ENCODE measurements at regions of chr12 and their contacts with region 1.

Region 1: DNA sequence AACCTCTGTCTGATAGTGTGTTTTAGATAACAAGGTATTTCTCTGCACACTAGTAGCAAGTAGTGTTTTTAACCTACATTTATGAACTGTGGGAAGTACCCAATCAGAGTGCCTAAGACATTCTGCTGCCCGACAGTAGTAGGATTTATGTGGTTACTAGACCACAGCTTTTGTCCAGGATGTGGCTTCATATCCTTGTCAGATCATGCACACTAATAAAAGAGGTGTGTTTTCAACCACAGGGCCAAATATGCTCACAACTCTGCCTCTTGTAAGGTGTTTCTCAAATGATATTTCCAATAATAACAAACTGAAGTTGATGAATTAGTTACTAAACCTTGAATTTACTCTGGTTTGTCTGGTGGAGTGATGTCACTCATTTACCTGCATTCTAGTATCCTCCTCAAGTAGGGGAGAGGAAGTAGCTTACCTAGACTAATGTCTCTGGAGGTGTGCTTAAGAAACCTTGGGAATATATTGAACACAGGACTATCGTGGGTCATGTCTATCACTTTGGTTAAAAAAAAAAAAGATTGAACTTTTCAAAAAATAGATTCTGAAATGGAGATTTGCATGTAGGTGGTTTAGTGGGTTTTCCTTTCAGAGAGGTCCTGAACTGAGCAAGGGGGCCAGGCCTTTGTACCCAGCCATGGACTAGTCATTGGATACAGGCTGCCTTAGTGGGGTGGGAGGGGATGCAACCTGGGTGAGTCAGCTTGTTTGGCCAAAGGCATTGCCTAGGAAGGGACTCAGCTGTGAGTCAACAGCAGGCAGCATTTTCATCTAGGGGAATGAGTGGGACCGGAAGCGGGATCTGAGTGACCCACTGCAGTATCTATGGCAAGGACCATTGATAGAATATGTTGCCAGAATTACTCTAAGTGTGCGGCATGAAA is 14.1 kb downstream of the FBXW8 start:
- DNase-seq: peak; percentile 91
- H3K4me3 Mint-ChIP-seq: peak overlapping the region; percentile 76
- H3K27ac Mint-ChIP-seq: peak overlapping the region; percentile 76
- H3K4me1 Mint-ChIP-seq: peaks cover 65% of the 10 kb centered on the region
- H3K27me3 Mint-ChIP-seq: peaks cover 10% of the 10 kb centered on the region

Region 2: DNA sequence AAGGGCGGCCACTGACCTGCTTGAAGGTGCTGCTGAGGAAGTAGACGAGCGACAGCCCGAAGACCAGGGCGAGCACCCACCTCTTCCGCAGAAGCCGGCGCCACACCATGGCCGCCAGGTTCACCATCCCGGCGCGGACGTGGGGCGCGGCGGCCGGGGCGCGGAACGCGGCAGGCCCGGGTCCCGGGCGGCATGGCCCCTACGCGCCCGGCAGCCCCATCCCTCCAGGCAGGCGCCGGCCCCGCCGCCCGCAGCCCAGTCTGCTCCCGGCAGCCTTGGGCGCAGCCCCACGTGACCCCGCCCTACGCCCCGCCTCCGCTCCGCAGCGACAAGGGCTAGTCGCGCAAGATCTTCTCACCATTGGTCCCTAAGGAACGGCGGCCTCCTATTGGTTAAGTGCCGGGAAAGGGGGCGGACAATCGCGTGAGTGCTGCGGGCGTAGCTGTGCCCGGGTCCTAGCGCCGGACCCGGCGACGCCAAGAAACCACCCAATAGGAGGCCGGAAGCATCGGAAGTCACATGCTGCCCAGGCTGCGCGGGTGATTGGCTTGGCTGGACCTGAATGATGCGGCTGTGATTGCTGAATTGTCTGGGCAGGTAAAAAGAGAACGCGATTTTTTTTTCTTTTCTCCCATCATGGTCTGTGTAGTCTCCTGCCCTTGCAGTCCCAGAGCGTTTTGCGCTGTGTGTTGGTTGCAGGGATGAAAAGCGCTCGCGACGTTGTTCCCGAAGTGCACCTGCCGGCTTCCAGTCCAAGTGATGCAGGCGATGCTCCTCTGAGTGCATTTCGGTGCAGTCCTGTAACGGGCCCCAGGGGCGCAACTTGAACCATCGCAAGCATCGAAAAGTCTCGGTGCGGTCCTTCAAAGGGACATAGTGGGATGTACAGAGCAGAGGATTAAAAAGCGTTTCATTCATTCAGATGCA is 186.8 kb before region 1 on chr12 and contains the starts of genes RNFT2 and SPRING1:
- intact Hi-C with region 1: loop called (anchors 1 kb)
- DNase-seq: peak; percentile 100
- H3K4me3 Mint-ChIP-seq: peak within 1 kb of the TSS; percentile 87
- H3K27ac Mint-ChIP-seq: peak within 1 kb of the TSS; percentile 89
- H3K4me1 Mint-ChIP-seq: peaks cover 13% of the 10 kb centered on the region
- H3K27me3 Mint-ChIP-seq: no peaks in the 10 kb centered on the region
- total RNA-seq, gene RNFT2: 10.1 and 11.6 TPM in 2 replicates
- total RNA-seq, gene SPRING1: 28.6 and 29.2 TPM in 2 replicates

Region 3: GRCh38 chr12:116910645-116911451 is 14.0 kb before region 1 on chr12 and contains the start of gene FBXW8:
- intact Hi-C with region 1: loop called (anchors 1 kb)
- DNase-seq: peak; percentile 92
- H3K4me3 Mint-ChIP-seq: peak within 1 kb of the TSS; percentile 86
- H3K27ac Mint-ChIP-seq: peak within 1 kb of the TSS; percentile 87
- H3K4me1 Mint-ChIP-seq: peaks cover 21% of the 10 kb centered on the region
- H3K27me3 Mint-ChIP-seq: peaks cover 31% of the 10 kb centered on the region
- total RNA-seq, gene FBXW8: 6.2 and 6.5 TPM in 2 replicates

Region 4: GRCh38 chr12:117098361-117099217 is 173.8 kb after region 1 on chr12:
- intact Hi-C with region 1: loop called (anchors 2 kb)
- DNase-seq: peak; percentile 79
- H3K4me3 Mint-ChIP-seq: peak overlapping the region; percentile 82
- H3K27ac Mint-ChIP-seq: peak overlapping the region; percentile 53
- H3K4me1 Mint-ChIP-seq: peaks cover 25% of the 10 kb centered on the region
- H3K27me3 Mint-ChIP-seq: peaks cover 25% of the 10 kb centered on the region

Region 5: GRCh38 chr12:117367011-117367638 is 442.3 kb after region 1 on chr12:
- intact Hi-C with region 1: no loop called
- DNase-seq: peak; percentile 86
- H3K4me3 Mint-ChIP-seq: no peak overlapping the region
- H3K27ac Mint-ChIP-seq: no peak overlapping the region
- H3K4me1 Mint-ChIP-seq: no peaks in the 10 kb centered on the region
- H3K27me3 Mint-ChIP-seq: peaks cover 22% of the 10 kb centered on the region

Region 6: DNA sequence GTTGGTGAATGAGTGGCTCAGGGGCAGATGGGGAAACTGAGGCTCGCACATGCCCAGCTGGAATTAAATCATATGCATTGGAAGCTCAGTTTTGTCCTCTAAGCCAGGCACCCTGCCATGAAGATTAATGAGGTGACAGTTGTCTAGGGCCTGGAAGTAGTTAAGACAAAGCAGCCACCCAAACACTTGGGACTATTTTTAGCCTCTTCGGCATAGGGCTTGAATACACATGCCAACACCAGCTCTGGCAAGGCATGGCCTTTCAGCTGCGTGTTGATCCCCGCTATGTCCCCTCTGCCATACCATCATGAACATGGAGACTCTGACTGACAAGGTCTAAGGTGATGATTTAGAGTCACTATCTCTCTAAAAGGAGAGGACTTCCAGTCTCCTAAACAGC is 793.8 kb after region 1 on chr12:
- intact Hi-C with region 1: no loop called
- DNase-seq: no peak
- H3K4me3 Mint-ChIP-seq: no peak overlapping the region
- H3K27ac Mint-ChIP-seq: no peak overlapping the region
- H3K4me1 Mint-ChIP-seq: no peaks in the 10 kb centered on the region
- H3K27me3 Mint-ChIP-seq: no peaks in the 10 kb centered on the region

Measured in activated CD4-positive, alpha-beta T cell treated with anti-CD3 and anti-CD28 coated beads, Interleukin-2, amount 10 ng/mL, durations not matched to agents 24 days and 14 days (primary cell).